Vagina (tissue), 2 donors: ENCODE measurements at regions of chr18 and their contacts with region 1.

Region 1: GRCh38 chr18:7598167-7599047 is 31.3 kb downstream of the PTPRM start:
- DNase-seq: no peak
- H3K4me3 ChIP-seq: no peak overlapping the region
- H3K27ac ChIP-seq: no peak overlapping the region
- H3K4me1 ChIP-seq: no peaks in the 10 kb centered on the region
- H3K27me3 ChIP-seq: no peaks in the 10 kb centered on the region
- CTCF ChIP-seq: no peak
- POLR2A ChIP-seq: no peak

Region 2: DNA sequence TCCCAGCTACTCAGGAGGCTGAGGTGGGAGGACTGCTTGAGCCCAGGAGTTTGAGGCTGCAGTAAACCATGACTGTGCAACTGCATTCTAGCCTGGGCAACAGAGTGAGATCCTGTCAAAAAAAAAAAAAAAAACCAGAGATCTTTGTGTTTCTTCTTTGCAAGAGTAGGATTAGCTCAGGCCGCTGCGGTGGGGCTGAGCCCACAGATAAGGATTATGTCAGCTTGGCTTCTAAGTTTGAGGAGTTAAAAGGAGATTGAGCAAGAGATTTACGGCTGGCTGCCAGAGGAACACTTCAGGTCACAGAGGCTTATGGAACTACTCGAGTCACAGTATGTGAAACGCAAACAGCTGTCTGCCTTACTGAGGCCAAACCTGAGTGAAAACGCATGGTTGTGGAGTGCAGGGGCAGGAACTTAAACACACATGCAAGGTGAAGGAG is 1037.0 kb before region 1 on chr18:
- intact Hi-C with region 1: loop called (anchors 5 kb)
- DNase-seq: no peak
- H3K4me3 ChIP-seq: no peak overlapping the region
- H3K27ac ChIP-seq: peak overlapping the region; percentile 32
- H3K4me1 ChIP-seq: peaks cover 19% of the 10 kb centered on the region
- H3K27me3 ChIP-seq: no peaks in the 10 kb centered on the region
- CTCF ChIP-seq: no peak
- POLR2A ChIP-seq: no peak

Region 3: GRCh38 chr18:7840411-7840810 is 242.0 kb after region 1 on chr18:
- intact Hi-C with region 1: no loop called
- DNase-seq: no peak
- H3K4me3 ChIP-seq: no peak overlapping the region
- H3K27ac ChIP-seq: no peak overlapping the region
- H3K4me1 ChIP-seq: no peaks in the 10 kb centered on the region
- H3K27me3 ChIP-seq: no peaks in the 10 kb centered on the region
- CTCF ChIP-seq: no peak
- POLR2A ChIP-seq: no peak